Head of caudate nucleus (tissue), 42 donors: ENCODE measurements at regions of chr9 and their contacts with region 1.

Region 1: GRCh38 chr9:76987594-76988200 is 31.8 kb upstream of the FOXB2 start:
- DNase-seq: peak in 40 of 42 donors; percentile 27 to 86 (median 65)

Region 2: GRCh38 chr9:76787677-76788076 is 200.0 kb before region 1 on chr9:
- intact Hi-C with region 1: no loop called
- DNase-seq: peak in 1 of 42 donors; percentile 38

Region 3: DNA sequence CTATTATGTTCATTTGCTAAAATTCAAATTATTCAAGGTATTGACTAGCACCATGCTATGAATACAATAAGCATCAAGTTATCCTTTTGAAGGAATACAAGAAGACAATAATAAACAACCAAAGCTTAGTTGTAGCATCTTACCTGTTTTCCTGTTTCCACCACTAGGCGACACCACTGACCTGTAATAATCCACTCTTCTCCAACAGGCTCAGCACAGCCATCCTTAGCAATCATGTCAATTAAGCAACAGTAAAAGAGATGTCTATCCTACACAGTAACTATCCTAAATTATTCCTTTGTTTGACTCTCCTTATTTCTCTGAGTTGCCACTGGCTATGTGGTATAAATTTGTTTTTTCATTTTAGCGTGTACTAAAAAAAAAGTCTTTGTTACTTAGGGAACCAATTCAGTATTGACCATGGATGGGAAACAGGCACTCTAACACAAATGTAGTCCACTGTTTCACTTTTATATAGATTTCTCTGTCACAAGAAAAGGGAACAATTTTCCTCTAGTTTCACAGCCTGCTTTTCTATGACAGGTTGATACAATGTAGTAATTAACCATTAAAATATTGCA is 177.2 kb before region 1 on chr9:
- intact Hi-C with region 1: loop called (anchors 5 kb)
- DNase-seq: peak in 34 of 42 donors; percentile 9 to 85 (median 50)